ENCODE measurements at regions of chr19 and their contacts with region 1.

Region 1: GRCh38 chr19:56973713-56974555 is 133.4 kb upstream of the PEG3 start:
- DNase-seq: no peak
- ATAC-seq: no peak
- H3K4me3 ChIP-seq: no peak overlapping the region
- H3K27ac ChIP-seq: no peak overlapping the region
- H3K4me1 ChIP-seq: no peaks in the 10 kb centered on the region
- H3K27me3 ChIP-seq: peaks cover 0 to 54% (median 36%) of the 10 kb centered on the region in 7 donors
- CTCF ChIP-seq: no peak

Region 2: DNA sequence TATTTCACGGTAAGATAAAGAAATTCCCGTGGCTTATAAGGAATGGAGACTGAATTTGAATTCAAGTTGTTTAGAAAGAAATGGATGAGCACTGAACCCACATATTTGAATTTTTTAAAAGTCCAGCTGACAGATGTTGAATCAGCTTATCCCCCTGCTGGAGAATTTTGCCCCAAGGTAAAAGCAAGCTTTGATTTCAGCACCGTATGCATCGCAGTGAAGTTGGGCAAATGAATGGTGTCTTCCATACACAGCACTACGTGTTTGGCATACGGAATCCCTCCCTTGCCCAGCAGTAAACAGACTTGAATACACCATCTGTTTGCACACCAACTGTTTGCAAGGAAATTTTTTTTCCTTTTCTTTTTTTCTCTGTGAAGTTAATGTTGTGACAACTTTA is 55.9 kb before region 1 on chr19:
- intact Hi-C with region 1: no loop called
- DNase-seq: no peak
- ATAC-seq: no peak
- H3K4me3 ChIP-seq: no peak overlapping the region
- H3K27ac ChIP-seq: no peak overlapping the region
- H3K4me1 ChIP-seq: no peaks in the 10 kb centered on the region
- H3K27me3 ChIP-seq: peaks cover 0 to 21% (median 8%) of the 10 kb centered on the region in 7 donors
- CTCF ChIP-seq: no peak

Region 3: DNA sequence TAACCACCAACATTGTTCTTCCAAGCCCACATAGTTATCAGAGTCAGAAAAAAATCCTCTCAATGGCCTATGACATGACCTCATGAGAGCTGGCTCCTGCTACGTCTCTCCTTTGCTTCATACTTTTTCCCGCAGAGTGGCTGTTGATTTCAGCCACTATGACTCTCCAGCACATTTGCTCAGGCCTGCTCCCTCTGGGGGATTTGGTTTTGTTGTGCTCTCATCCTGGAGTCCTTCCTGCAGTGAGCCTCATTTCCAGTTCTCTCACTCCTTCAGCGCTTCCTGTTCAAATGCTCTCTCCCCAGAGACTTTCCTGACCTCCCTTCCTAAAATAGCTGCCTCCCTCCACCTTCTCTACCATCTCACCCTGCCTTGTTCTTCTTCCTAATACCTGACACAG is 73.8 kb after region 1 on chr19:
- intact Hi-C with region 1: loop called in 1 of 10 experiments (anchors 10 kb)
- DNase-seq: no peak
- ATAC-seq: peak in 2 of 8 donors; percentile 20 to 46
- H3K4me3 ChIP-seq: no peak overlapping the region
- H3K27ac ChIP-seq: no peak overlapping the region
- H3K4me1 ChIP-seq: no peaks in the 10 kb centered on the region
- H3K27me3 ChIP-seq: peaks cover 0 to 6% (median 0%) of the 10 kb centered on the region in 7 donors
- CTCF ChIP-seq: no peak

Measured in heart right ventricle (tissue), 16 donors.